GM12878 (cell line): ENCODE measurements at regions of chr14 and their contacts with region 1.

Region 1: DNA sequence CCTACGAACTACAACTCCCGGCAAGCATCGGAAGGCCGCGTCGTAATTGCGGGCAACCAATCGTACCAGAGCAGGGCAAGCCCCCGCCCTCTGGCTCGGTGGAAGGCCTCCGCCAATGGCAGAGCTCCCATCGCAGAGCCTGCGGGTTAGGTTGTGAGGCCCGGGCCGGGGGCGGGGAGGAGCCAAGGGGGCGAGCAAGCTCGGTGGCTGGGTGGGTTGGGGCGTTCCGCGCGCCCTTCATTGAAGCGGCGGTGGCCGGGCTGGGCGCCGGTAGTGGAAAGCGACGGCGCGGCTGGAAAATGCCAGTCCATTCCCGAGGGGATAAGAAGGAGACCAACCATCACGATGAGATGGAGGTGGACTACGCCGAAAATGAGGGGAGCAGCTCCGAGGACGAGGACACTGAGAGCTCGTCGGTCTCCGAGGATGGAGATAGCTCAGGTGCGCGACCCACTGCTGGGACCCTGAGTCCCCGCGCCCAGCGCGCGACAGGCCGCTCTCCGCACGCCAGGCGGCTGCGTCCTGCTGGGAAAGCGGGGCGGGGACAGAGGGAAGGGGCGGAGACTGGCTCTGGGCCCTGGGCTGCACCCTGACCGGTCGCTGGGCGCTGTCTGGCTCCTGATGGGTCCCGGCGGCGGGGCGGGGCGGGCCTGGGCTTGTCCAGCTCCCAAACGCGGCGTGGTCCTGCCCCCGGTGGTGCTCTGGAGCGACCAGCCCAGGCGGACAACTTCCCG is at the start of gene BRMS1L:
- DNase-seq: peak; percentile 97
- ATAC-seq: peak; percentile 97
- H3K4me3 ChIP-seq: peak within 1 kb of the TSS; percentile 96
- H3K27ac ChIP-seq: peak within 1 kb of the TSS; percentile 84
- H3K4me1 ChIP-seq: no peaks in the 10 kb centered on the region
- H3K27me3 ChIP-seq: no peaks in the 10 kb centered on the region
- CTCF ChIP-seq: no peak
- EP300 ChIP-seq: no peak; a peak in 1 of 4 replicates
- POLR2A ChIP-seq: peak; percentile 86
- RAD21 ChIP-seq: no peak
- polyA plus RNA-seq, gene BRMS1L: 7.6 to 8.0 TPM

Region 2: DNA sequence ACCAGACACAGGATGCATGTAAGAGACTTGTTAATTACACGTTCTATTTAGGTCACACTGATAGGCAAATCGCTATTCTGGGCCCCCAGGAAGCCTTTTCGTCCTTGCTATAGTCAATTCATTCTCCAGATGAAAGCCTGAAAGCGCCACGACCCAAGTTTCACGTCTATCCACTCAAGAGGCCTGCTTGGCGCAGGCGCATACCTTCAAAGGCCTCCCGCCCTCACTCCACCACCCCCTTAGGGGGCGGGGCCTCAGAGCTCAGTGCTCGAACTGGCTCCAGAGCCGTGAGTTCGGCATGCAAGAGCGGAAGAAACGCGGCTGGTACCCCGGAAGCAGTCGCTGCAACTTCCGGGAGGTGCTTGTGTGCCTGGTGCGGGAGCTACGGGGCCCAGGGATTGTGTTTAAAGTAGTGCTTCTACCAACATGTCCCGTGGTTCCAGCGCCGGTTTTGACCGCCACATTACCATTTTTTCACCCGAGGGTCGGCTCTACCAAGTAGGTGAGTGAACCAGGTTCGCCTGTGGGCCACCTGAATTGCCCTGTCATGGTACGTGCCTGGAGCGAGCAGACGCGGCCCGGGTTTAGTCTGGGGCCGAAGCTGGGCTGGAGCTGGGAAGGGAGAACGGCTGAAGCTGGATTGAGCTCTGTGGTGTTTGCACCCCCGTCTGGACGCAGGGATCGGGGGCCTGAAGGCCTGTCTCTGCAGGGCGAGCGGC is 534.2 kb before region 1 on chr14 and contains the start of gene PSMA6:
- CTCF ChIA-PET with region 1: no interaction called
- POLR2A ChIA-PET with region 1: no interaction called
- RAD21 ChIA-PET with region 1: no interaction called
- SMC1A ChIA-PET with region 1: no interaction called
- in situ Hi-C with region 1: no loop called
- intact Hi-C with region 1: loop called (anchors 2 kb)
- DNase-seq: peak; percentile 98
- ATAC-seq: peak; percentile 90
- H3K4me3 ChIP-seq: peak within 1 kb of the TSS; percentile 86
- H3K27ac ChIP-seq: peak within 1 kb of the TSS; percentile 80
- H3K4me1 ChIP-seq: peaks cover 18% of the 10 kb centered on the region
- H3K27me3 ChIP-seq: no peaks in the 10 kb centered on the region
- CTCF ChIP-seq: no peak
- EP300 ChIP-seq: 0 out of 4 replicates have a peak, but pooled peaks have one; percentile 20 to 36
- POLR2A ChIP-seq: peak; percentile 83
- RAD21 ChIP-seq: no peak
- polyA plus RNA-seq, gene PSMA6: 1,136 to 1,363 TPM

Region 3: GRCh38 chr14:35725930-35726329 is 100.5 kb before region 1 on chr14:
- CTCF ChIA-PET with region 1: no interaction called
- POLR2A ChIA-PET with region 1: no interaction called
- RAD21 ChIA-PET with region 1: no interaction called
- SMC1A ChIA-PET with region 1: no interaction called
- in situ Hi-C with region 1: no loop called
- intact Hi-C with region 1: no loop called
- DNase-seq: no peak
- ATAC-seq: no peak
- H3K4me3 ChIP-seq: no peak overlapping the region
- H3K27ac ChIP-seq: no peak overlapping the region
- H3K4me1 ChIP-seq: no peaks in the 10 kb centered on the region
- H3K27me3 ChIP-seq: no peaks in the 10 kb centered on the region
- CTCF ChIP-seq: no peak
- EP300 ChIP-seq: no peak
- POLR2A ChIP-seq: no peak
- RAD21 ChIP-seq: no peak

Region 4: DNA sequence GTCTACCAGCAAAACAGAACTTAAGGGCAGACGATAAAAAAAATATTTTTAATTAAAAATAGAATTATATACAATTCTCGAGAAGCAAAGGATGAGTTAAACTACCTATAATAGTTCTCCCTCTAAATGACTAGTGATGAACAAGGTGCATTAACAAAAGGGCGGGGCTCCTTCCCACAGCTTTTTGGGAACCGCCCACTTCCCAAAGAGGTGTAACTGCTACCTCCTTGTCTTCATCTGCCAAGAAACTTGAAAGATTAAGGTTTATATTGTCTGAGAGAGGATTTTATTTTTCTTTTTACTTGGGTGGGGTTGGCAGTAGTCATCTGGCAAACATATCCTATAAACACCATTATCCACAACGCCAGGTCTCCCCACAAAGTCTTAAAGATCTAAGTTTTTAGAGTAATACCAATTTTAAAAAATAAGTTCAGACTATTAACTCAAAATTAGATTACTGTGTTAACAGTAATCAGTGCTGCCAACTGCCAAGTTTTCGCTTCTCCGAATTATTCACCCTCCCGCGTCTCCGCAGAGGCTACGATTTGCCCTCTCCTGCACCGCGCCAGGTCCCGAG is 18.2 kb before region 1 on chr14:
- CTCF ChIA-PET with region 1: interaction called, 22 read pairs
- POLR2A ChIA-PET with region 1: interaction called, 8 read pairs
- RAD21 ChIA-PET with region 1: interaction called, 8 read pairs
- SMC1A ChIA-PET with region 1: interaction called, 4 read pairs
- in situ Hi-C with region 1: no loop called
- intact Hi-C with region 1: loop called (anchors 2 kb)
- DNase-seq: no peak
- ATAC-seq: peak; percentile 7; the same call in 2 of the 3 replicates
- H3K4me3 ChIP-seq: peak overlapping the region; percentile 79
- H3K27ac ChIP-seq: peak overlapping the region; percentile 75
- H3K4me1 ChIP-seq: no peaks in the 10 kb centered on the region
- H3K27me3 ChIP-seq: no peaks in the 10 kb centered on the region
- CTCF ChIP-seq: no peak
- EP300 ChIP-seq: no peak
- POLR2A ChIP-seq: no peak
- RAD21 ChIP-seq: no peak

Region 5: GRCh38 chr14:35855876-35856481 is 29.6 kb after region 1 on chr14:
- CTCF ChIA-PET with region 1: interaction called, 11 read pairs
- POLR2A ChIA-PET with region 1: interaction called, 4 read pairs
- RAD21 ChIA-PET with region 1: interaction called, 4 read pairs
- SMC1A ChIA-PET with region 1: interaction called, 4 read pairs
- in situ Hi-C with region 1: no loop called
- intact Hi-C with region 1: no loop called
- DNase-seq: peak; percentile 85
- ATAC-seq: peak; percentile 97
- H3K4me3 ChIP-seq: no peak overlapping the region
- H3K27ac ChIP-seq: peak overlapping the region; percentile 27; the same call in 1 of the 2 replicates
- H3K4me1 ChIP-seq: peaks cover 28% of the 10 kb centered on the region
- H3K27me3 ChIP-seq: no peaks in the 10 kb centered on the region
- CTCF ChIP-seq: peak in 1 of 3 experiments; percentile 29; a peak in 2 of 6 replicates
- EP300 ChIP-seq: peak; percentile 85 to 100; a peak in 3 of 4 replicates
- POLR2A ChIP-seq: no peak
- RAD21 ChIP-seq: peak; percentile 38; the same call in 1 of the 2 replicates

Region 6: GRCh38 chr14:35940291-35940690 is 113.9 kb after region 1 on chr14:
- CTCF ChIA-PET with region 1: no interaction called
- POLR2A ChIA-PET with region 1: no interaction called
- RAD21 ChIA-PET with region 1: no interaction called
- SMC1A ChIA-PET with region 1: no interaction called
- in situ Hi-C with region 1: no loop called
- intact Hi-C with region 1: no loop called
- DNase-seq: peak; percentile 73
- ATAC-seq: peak; percentile 96
- H3K4me3 ChIP-seq: peak overlapping the region; percentile 5; the same call in 1 of the 2 replicates
- H3K27ac ChIP-seq: no peak overlapping the region
- H3K4me1 ChIP-seq: peaks cover under 1% of the 10 kb centered on the region; the same call in 1 of the 2 replicates
- H3K27me3 ChIP-seq: no peaks in the 10 kb centered on the region
- CTCF ChIP-seq: no peak
- EP300 ChIP-seq: peak in 1 of 2 experiments; percentile 57; a peak in 1 of 4 replicates
- POLR2A ChIP-seq: no peak
- RAD21 ChIP-seq: no peak